ENCODE measurements at regions of chr6 and their contacts with region 1.

Region 1: DNA sequence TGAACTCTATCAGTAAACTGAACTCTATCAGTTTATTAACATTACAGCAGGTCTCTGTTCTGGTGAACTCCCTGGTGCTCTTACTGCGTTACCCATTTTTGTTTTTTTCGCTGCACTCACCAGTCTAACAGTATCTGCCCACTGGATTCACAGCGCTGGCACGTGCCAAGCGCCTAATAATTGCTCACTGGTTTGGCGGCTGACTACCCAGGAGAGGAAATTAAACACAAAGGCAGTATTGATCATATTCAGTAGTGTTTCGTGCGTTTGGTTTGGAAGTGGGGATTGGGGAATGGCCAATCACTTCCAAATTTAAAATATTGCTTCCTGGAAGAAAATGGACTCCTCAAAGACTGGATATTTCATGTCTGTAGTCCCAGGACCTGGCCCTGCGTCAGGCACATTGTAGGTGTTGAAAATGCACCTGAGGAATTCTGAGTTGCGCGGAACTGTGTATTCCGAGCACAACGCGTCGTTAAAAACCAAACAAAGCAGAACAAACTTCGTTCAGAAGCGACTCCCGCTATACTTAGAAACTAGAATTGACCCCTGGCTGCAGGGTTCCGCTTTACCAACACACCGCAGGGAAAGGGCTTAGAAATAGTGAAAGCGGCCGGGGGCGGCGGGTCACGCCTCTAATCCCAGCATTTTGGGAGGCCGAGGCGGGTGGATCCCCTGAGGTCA is 1.1 kb upstream of the RPS12 start:
- DNase-seq: peak; percentile 56
- ATAC-seq: peak; percentile 11
- H3K4me3 Mint-ChIP-seq: peak overlapping the region; percentile 90
- H3K27ac Mint-ChIP-seq: peak overlapping the region; percentile 98
- H3K4me1 Mint-ChIP-seq: peaks cover 26% of the 10 kb centered on the region
- H3K27me3 Mint-ChIP-seq: peaks cover 6% of the 10 kb centered on the region

Region 2: DNA sequence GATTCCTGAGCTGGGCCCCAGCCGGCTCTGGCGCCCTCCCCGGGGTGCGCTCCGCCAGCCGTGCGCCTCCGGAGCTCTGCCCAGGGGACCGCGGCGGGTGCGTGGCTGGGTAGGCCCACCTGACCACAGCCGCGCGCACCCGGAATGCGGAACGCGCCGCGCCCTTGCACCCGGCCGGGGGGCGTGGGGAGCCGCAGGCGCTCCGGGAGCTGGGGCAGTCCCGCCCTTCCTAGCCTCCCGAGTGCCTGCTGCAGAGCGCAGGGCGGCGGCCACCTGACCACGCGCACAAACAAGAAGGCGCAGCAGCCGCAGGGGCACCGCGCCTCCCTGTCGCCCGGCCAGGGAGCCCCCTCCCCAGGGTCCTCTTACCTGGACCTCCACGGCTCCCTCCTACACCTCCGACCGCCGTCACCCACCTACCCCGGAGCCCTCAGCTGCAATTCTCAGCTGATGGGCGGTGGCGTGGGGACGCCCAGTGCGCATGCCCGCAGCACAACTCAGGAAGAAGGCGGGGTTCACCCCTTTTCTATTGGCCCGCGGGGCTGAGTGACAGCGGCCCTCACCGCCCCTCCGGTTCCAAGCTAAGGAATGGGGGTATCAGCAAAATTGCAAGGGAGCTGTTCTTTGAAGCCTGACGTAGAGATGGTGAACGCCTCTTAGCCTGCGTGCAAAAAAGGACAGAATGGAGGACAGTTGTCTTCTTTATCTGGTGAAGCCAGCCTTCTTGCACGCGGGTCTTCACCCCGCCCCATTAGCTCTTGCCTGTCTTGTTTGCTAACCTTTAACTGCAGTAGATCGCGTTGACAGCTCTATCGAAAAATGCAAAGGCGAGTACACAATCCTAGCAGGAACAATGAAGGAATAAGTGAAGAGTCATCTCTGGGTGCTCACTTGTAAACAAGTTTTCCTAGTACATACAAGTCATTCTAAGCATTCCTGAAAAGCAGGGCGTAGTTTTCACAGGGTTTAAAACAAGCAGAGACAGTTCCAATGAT is 300.4 kb before region 1 on chr6 and contains the start of gene STX7:
- POLR2A ChIA-PET with region 1: interaction called, 16 read pairs
- DNase-seq: peak; percentile 89
- ATAC-seq: peak; percentile 96
- H3K4me3 Mint-ChIP-seq: peak within 1 kb of the TSS; percentile 98
- H3K27ac Mint-ChIP-seq: peak within 1 kb of the TSS; percentile 82
- H3K4me1 Mint-ChIP-seq: peaks cover 16% of the 10 kb centered on the region
- H3K27me3 Mint-ChIP-seq: peaks cover 3% of the 10 kb centered on the region
- total RNA-seq, gene STX7: 20.5 to 25.0 TPM

Region 3: GRCh38 chr6:132742495-132742894 is 70.8 kb before region 1 on chr6:
- POLR2A ChIA-PET with region 1: no interaction called
- DNase-seq: no peak
- ATAC-seq: no peak
- H3K4me3 Mint-ChIP-seq: no peak overlapping the region
- H3K27ac Mint-ChIP-seq: no peak overlapping the region
- H3K4me1 Mint-ChIP-seq: peaks cover 6% of the 10 kb centered on the region
- H3K27me3 Mint-ChIP-seq: peaks cover 2% of the 10 kb centered on the region

Region 4: GRCh38 chr6:132763269-132763668 is 50.0 kb before region 1 on chr6:
- POLR2A ChIA-PET with region 1: interaction called, 26 read pairs
- DNase-seq: peak; percentile 41
- ATAC-seq: peak; percentile 99
- H3K4me3 Mint-ChIP-seq: peak overlapping the region; percentile 74
- H3K27ac Mint-ChIP-seq: peak overlapping the region; percentile 79
- H3K4me1 Mint-ChIP-seq: peaks cover 23% of the 10 kb centered on the region
- H3K27me3 Mint-ChIP-seq: no peaks in the 10 kb centered on the region

Region 5: GRCh38 chr6:132792510-132792909 is 20.8 kb before region 1 on chr6:
- POLR2A ChIA-PET with region 1: interaction called, 112 read pairs
- DNase-seq: no peak
- ATAC-seq: no peak
- H3K4me3 Mint-ChIP-seq: no peak overlapping the region
- H3K27ac Mint-ChIP-seq: no peak overlapping the region
- H3K4me1 Mint-ChIP-seq: peaks cover 11% of the 10 kb centered on the region
- H3K27me3 Mint-ChIP-seq: no peaks in the 10 kb centered on the region

Region 6: DNA sequence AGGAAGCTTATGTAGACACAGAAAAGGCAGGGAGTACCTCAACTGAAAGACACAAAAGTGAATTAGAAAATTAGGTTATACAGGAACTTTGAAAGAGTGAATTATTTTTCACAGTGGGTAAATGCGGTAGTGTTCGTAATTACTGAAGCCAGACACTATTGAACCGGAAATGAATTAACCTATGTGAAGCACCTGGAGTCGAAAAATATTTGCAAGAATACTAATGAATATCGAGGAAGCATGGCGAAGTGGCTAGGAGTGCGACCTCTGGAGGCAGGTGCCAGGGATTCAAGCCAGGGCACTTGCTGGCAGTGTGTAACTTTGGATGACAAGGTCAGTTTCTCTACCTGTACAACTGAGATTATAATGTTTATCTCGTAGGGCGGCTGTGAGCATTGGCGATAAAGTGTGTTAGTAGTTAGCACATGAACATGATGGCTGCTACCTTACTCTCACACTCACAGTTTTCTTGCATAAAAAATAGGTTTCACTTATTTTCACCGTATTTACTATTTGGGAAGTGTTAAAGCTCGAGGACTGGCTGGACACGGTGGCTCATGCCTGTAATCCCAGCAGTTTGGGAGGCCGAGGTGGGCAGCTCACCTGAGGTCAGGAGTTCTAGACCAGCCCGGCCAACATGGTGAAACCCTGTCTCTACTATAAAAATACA is 14.3 kb before region 1 on chr6:
- POLR2A ChIA-PET with region 1: interaction called, 112 read pairs
- DNase-seq: peak; percentile 65
- ATAC-seq: peak; percentile 82
- H3K4me3 Mint-ChIP-seq: no peak overlapping the region
- H3K27ac Mint-ChIP-seq: no peak overlapping the region
- H3K4me1 Mint-ChIP-seq: peaks cover 7% of the 10 kb centered on the region
- H3K27me3 Mint-ChIP-seq: no peaks in the 10 kb centered on the region

Region 7: DNA sequence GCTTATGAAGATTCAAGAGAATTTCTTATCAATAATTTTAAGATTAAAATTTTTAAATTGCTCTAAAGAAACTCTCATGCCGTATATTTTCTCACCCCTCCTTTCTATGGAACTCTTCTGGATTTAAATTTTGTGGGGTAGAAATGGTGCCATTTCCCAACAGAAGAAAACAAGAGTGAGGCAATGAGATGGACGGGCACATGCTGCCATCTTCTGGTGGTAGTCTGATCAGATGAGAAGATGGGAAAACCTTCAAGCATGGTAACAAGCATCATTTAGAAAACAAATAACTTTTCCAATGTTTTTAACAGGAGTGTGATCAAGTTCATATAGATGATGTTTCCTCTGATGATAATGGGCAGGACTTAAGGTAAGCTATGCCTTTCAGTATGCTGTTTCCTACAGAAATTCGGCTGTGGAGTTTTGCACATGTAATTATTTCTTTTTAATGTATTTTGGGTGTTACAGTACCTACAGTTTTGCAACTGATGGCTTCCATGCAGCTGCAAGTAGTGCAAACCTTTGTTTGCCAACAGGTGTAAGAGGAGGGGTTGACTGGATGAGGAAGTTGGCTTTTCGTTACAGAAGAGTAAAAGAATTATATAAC is 699.2 kb after region 1 on chr6:
- POLR2A ChIA-PET with region 1: no interaction called
- DNase-seq: no peak
- ATAC-seq: no peak
- H3K4me3 Mint-ChIP-seq: no peak overlapping the region
- H3K27ac Mint-ChIP-seq: no peak overlapping the region
- H3K4me1 Mint-ChIP-seq: no peaks in the 10 kb centered on the region
- H3K27me3 Mint-ChIP-seq: peaks cover 2% of the 10 kb centered on the region

Measured in activated naive CD8-positive, alpha-beta T cell treated with anti-CD3 and anti-CD28 coated beads, Interleukin-2, amount 10 ng/mL, durations not matched to agents 7 days and 5 days (primary cell).